ENCODE measurements at regions of chr13 and their contacts with region 1.

Region 1: GRCh38 chr13:64819081-64819480 is 2411.1 kb downstream of the PCDH9 start:
- DNase-seq: no peak
- H3K4me3 ChIP-seq: no peak overlapping the region
- H3K4me3 Mint-ChIP-seq: no peak overlapping the region
- H3K27ac Mint-ChIP-seq: no peak overlapping the region
- H3K4me1 ChIP-seq: no peaks in the 10 kb centered on the region
- H3K4me1 Mint-ChIP-seq: no peaks in the 10 kb centered on the region
- H3K27me3 ChIP-seq: no peaks in the 10 kb centered on the region
- H3K27me3 Mint-ChIP-seq: no peaks in the 10 kb centered on the region
- CTCF ChIP-seq: no peak

Region 2: DNA sequence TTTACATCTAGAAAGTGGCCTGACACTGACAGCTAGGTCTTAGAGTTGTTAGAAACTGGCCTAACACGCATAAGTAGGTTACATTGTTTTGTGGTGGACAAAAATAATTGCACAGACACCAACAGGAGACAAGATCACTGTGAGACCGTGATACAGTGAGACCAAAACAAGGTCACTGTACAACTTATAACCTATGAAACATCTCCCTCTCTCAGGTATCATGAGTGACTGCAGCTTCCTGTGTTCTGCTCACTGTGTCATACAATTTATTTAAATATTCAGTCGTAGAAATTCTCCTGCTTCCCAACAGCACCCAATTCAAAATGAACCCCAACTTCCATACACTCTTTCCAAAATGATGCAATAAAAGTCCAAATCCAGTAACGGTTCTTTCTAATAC is 245.9 kb after region 1 on chr13:
- CTCF ChIA-PET with region 1: no interaction called
- POLR2A ChIA-PET with region 1: no interaction called
- intact Hi-C with region 1: loop called (anchors 5 kb)
- DNase-seq: no peak
- H3K4me3 ChIP-seq: no peak overlapping the region
- H3K4me3 Mint-ChIP-seq: no peak overlapping the region
- H3K27ac Mint-ChIP-seq: no peak overlapping the region
- H3K4me1 ChIP-seq: no peaks in the 10 kb centered on the region
- H3K4me1 Mint-ChIP-seq: no peaks in the 10 kb centered on the region
- H3K27me3 ChIP-seq: no peaks in the 10 kb centered on the region
- H3K27me3 Mint-ChIP-seq: no peaks in the 10 kb centered on the region
- CTCF ChIP-seq: no peak